OCI-LY7 (cell line): ENCODE measurements at regions of chr15 and their contacts with region 1.

Region 1: DNA sequence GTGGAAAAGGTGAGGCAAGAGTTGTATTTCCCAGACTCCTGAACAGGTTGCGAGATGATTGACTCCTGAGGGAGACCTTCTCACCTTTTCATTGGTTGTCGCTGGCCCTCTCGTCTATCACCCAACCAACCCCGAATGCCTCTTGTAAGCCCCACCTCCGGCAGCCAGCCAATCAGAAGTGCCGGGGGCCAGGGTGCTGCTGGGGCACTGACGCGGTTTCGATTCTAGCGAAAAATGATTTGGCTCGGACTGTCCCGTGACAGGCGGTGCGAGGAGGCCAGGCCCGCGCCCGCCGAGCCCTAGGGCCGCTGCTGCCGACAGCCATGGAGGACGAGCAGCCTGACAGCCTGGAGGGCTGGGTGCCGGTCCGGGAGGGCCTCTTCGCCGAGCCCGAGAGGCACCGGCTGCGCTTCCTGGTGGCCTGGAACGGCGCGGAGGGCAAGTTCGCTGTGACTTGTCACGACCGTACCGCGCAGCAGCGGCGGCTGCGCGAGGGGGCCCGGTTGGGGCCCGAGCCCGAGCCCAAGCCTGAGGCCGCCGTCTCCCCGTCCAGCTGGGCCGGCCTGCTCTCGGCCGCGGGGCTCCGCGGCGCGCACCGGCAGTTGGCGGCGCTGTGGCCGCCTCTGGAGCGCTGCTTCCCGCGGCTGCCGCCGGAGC is at the start of gene WHAMM:
- DNase-seq: peak; percentile 97
- H3K4me3 ChIP-seq: peak within 1 kb of the TSS; percentile 95
- H3K27ac ChIP-seq: peak within 1 kb of the TSS; percentile 91
- H3K4me1 ChIP-seq: peaks cover 57% of the 10 kb centered on the region
- CTCF ChIP-seq: peak; percentile 33
- total RNA-seq, gene WHAMM: 7.3 and 8.6 TPM in 2 replicates

Region 2: GRCh38 chr15:82540055-82540983 is 269.2 kb before region 1 on chr15 and contains the start of gene RPS17:
- CTCF ChIA-PET with region 1: no interaction called
- POLR2A ChIA-PET with region 1: no interaction called
- intact Hi-C with region 1: loop called (anchors 1 kb)
- DNase-seq: peak; percentile 96
- H3K4me3 ChIP-seq: peak within 1 kb of the TSS; percentile 78
- H3K27ac ChIP-seq: peak within 1 kb of the TSS; percentile 66
- H3K4me1 ChIP-seq: peaks cover 29% of the 10 kb centered on the region
- CTCF ChIP-seq: peak; percentile 90
- total RNA-seq, gene RPS17: 3,737 and 4,080 TPM in 2 replicates

Region 3: DNA sequence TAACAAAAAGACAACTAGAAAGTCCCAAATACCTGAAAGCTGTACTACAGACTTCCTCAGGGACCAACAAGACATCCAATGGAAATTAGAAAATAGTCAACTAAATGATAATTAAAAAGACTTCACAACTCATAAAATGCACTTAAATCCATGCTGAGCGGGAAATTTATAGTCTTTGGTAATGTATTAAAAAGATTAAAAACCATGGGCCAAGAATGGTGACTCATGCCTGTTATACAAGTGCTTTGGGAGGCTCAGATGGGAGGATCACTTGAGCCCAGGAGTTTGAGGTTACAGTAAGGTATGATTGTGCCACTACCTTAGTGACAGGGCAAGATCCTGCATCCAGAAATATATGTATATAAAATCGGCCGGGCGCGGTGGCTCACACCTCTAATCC is 207.3 kb before region 1 on chr15:
- CTCF ChIA-PET with region 1: no interaction called
- POLR2A ChIA-PET with region 1: no interaction called
- intact Hi-C with region 1: no loop called
- DNase-seq: no peak
- H3K4me3 ChIP-seq: no peak overlapping the region
- H3K27ac ChIP-seq: no peak overlapping the region
- H3K4me1 ChIP-seq: no peaks in the 10 kb centered on the region
- CTCF ChIP-seq: no peak

Region 4: GRCh38 chr15:82749951-82750830 is 59.3 kb before region 1 on chr15:
- CTCF ChIA-PET with region 1: no interaction called
- POLR2A ChIA-PET with region 1: interaction called, 26 read pairs
- intact Hi-C with region 1: loop called (anchors 1 kb)
- DNase-seq: peak; percentile 92
- H3K4me3 ChIP-seq: peak overlapping the region; percentile 90
- H3K27ac ChIP-seq: peak overlapping the region; percentile 75
- H3K4me1 ChIP-seq: peaks cover 36% of the 10 kb centered on the region
- CTCF ChIP-seq: no peak

Region 5: GRCh38 chr15:82849556-82850512 is 40.3 kb after region 1 on chr15:
- CTCF ChIA-PET with region 1: no interaction called
- POLR2A ChIA-PET with region 1: interaction called, 3 read pairs
- intact Hi-C with region 1: loop called (anchors 2 kb)
- DNase-seq: peak; percentile 82
- H3K4me3 ChIP-seq: no peak overlapping the region
- H3K27ac ChIP-seq: no peak overlapping the region
- H3K4me1 ChIP-seq: peaks cover 19% of the 10 kb centered on the region
- CTCF ChIP-seq: peak; percentile 87

Region 6: GRCh38 chr15:82985688-82986441 is 176.3 kb after region 1 on chr15 and contains the start of gene RAMAC:
- CTCF ChIA-PET with region 1: no interaction called
- POLR2A ChIA-PET with region 1: no interaction called
- intact Hi-C with region 1: loop called (anchors 2 kb)
- DNase-seq: peak; percentile 98
- H3K4me3 ChIP-seq: peak within 1 kb of the TSS; percentile 95
- H3K27ac ChIP-seq: peak within 1 kb of the TSS; percentile 46
- H3K4me1 ChIP-seq: peaks cover 13% of the 10 kb centered on the region
- CTCF ChIP-seq: no peak
- total RNA-seq, gene RAMAC: 28.1 and 39.0 TPM in 2 replicates

Region 7: GRCh38 chr15:83066734-83067637 is 257.5 kb after region 1 on chr15 and contains the start of gene BTBD1:
- CTCF ChIA-PET with region 1: no interaction called
- POLR2A ChIA-PET with region 1: interaction called, 3 read pairs
- intact Hi-C with region 1: loop called (anchors 2 kb)
- DNase-seq: peak; percentile 95
- H3K4me3 ChIP-seq: peak within 1 kb of the TSS; percentile 80
- H3K27ac ChIP-seq: peak within 1 kb of the TSS; percentile 82
- H3K4me1 ChIP-seq: peaks cover 44% of the 10 kb centered on the region
- CTCF ChIP-seq: peak; percentile 5; the same call in 1 of the 2 replicates
- total RNA-seq, gene BTBD1: 95.4 and 99.5 TPM in 2 replicates

Region 8: DNA sequence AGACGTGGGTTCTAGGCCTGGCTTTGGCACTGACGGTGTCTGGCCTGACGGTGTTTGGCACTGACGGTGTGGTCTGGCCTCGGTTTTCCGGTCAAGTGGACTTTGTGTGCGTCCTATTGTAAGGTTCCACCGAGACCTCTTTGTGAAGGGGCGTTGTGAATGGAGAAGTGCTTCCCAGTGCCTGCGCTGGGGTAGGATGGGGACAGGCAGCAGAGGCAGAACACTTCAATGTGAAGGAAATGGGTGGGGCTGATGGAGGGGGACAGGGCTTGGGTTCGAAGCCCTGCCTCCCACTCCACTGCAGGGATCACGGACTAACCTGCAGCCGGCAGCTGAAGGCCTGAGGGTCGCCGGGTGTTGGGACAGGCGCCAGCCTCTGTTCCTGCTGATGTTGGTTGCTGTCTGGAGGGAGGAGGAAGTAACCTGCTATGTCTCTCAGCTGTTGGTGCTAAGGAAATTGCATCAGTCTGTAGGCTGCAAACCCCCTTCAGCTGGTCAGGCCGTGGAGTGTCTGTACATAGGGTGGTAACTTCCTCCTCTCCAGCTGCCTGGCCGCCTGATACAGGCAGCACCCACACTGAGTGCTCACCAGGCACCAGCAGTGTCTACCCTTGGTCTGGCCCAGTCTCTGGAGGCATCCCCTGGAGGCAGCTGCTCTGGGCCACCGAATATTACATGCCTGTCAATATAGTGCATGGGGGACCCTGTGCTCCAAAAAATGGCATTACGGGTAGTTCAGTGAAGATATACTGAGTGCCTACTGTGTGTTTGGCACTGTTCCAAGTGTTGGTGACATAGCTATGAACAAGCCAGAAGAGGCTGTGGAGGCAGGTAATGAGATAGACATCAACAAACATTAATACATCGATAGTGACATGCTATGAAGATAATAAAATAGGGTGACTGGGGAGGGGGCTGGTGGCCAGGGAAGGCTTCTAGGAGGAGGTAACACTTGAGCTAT is 299.0 kb after region 1 on chr15:
- CTCF ChIA-PET with region 1: no interaction called
- POLR2A ChIA-PET with region 1: no interaction called
- intact Hi-C with region 1: loop called (anchors 5 kb)
- DNase-seq: peak; percentile 93
- H3K4me3 ChIP-seq: peak overlapping the region; percentile 74
- H3K27ac ChIP-seq: peak overlapping the region; percentile 74
- H3K4me1 ChIP-seq: peaks cover 23% of the 10 kb centered on the region
- CTCF ChIP-seq: no peak